Activated T-helper 2 cell treated with anti-CD3 and anti-CD28 coated beads, Interferon-gamma antibody, Interleukin-2, Interleukin-4, amounts not matched to agents 10 μg/mL and 5 μg/mL and 100 μg/mL, durations not matched to agents 14 hours and 24 hours and 36 hours (primary cell): ENCODE measurements at regions of chr2 and their contacts with region 1.

Region 1: DNA sequence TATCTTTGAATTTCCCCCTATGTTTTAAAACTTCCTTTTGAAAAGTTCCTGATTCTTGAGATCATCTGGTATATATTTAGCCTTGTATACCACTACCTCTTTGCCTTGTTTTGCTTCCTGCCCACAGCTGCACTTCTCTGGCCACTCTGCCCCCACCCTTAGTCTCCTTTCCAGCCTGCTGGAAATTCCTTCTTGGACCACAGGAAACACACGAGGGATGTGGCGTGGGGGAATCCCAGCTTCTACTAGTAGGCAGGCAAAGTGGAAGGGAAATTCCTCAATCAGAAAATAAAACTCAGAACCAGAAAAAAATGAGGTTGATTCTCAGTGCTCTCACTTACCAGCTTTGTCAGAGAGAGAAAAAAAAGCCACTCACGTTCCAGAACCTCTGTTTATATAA is 13.4 kb downstream of the IL18RAP start:
- DNase-seq: no peak
- H3K4me3 Mint-ChIP-seq: peak overlapping the region; percentile 9
- H3K27ac Mint-ChIP-seq: peak overlapping the region; percentile 63
- H3K4me1 Mint-ChIP-seq: peaks cover 32% of the 10 kb centered on the region
- H3K27me3 Mint-ChIP-seq: no peaks in the 10 kb centered on the region

Region 2: GRCh38 chr2:101710471-101711318 is 725.6 kb before region 1 on chr2:
- intact Hi-C with region 1: loop called (anchors 10 kb)
- DNase-seq: no peak
- H3K4me3 Mint-ChIP-seq: no peak overlapping the region
- H3K27ac Mint-ChIP-seq: no peak overlapping the region
- H3K4me1 Mint-ChIP-seq: peaks cover 48% of the 10 kb centered on the region
- H3K27me3 Mint-ChIP-seq: no peaks in the 10 kb centered on the region

Region 3: DNA sequence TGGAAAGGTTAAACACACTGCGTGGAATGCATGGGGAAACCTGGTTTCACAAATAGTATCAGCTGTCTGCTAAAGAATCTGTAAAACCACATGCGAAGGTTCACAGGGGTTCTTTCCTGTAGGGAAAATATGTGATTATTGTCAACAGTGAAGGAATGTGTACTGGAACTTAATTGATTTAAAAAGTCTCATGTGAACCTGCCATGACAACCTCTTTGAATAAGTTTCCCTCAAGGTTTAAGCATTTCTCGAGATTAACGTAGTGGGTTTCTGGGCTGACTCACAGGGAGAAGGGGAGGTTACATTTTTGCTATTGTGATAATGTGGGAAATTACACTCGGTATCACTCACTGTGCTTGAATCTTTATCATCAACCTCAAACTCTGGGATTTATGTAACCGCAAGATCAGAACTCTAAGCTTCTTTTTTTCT is 322.0 kb before region 1 on chr2:
- intact Hi-C with region 1: no loop called
- DNase-seq: no peak
- H3K4me3 Mint-ChIP-seq: no peak overlapping the region
- H3K27ac Mint-ChIP-seq: no peak overlapping the region
- H3K4me1 Mint-ChIP-seq: peaks cover 25% of the 10 kb centered on the region
- H3K27me3 Mint-ChIP-seq: peaks cover 43% of the 10 kb centered on the region

Region 4: DNA sequence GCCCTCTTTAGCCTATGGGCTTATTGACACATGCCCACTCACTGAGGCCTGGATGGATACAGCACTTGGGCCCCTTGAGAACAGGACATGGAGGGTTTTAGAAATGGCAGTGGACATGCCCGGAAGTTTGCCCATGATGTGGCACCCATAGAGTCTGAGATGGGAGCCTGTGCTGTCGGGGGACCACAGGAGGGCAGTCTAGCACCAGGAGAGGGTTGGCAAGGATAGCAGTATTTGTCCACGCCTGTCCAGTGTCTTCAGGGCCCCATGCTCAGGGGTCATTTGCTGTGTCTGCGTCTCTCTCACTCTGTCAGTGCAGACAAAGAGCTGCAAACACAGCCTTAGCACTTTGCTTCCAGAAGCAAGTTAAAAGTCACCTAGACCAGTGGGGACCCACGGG is 200.8 kb before region 1 on chr2:
- intact Hi-C with region 1: loop called (anchors 2 kb)
- DNase-seq: no peak
- H3K4me3 Mint-ChIP-seq: no peak overlapping the region
- H3K27ac Mint-ChIP-seq: no peak overlapping the region
- H3K4me1 Mint-ChIP-seq: peaks cover 48% of the 10 kb centered on the region
- H3K27me3 Mint-ChIP-seq: peaks cover 2% of the 10 kb centered on the region

Region 5: DNA sequence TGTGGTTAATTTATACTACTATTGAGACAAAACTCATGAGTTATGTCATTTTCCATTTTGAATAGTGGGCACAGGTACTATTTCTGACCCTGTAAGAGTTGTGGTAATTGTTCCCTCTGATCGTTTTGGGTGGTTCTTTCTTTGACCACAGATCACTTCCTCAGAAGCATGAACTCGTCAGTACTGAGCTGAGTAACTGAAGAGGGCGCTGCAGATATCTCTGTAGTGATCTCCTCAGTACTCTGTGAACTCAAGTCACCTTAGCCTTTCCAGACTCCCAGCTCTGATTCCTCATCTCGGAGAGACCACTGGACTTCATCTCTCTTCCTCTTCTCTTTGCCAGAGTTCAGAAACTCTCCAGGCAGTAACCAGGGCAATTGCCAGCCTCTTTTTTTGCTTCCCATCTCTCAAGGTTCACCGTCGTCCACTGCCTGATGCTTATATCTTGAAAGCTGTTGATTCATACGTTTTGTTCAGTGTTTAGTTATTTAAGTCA is 134.4 kb before region 1 on chr2:
- intact Hi-C with region 1: loop called (anchors 1 kb)
- DNase-seq: peak; percentile 55
- H3K4me3 Mint-ChIP-seq: peak overlapping the region; percentile 59
- H3K27ac Mint-ChIP-seq: peak overlapping the region; percentile 96
- H3K4me1 Mint-ChIP-seq: peaks cover 76% of the 10 kb centered on the region
- H3K27me3 Mint-ChIP-seq: no peaks in the 10 kb centered on the region

Region 6: GRCh38 chr2:102418421-102418961 is 17.8 kb before region 1 on chr2:
- intact Hi-C with region 1: loop called (anchors 1 kb)
- DNase-seq: no peak
- H3K4me3 Mint-ChIP-seq: peak overlapping the region; percentile 73
- H3K27ac Mint-ChIP-seq: peak overlapping the region; percentile 75
- H3K4me1 Mint-ChIP-seq: peaks cover 69% of the 10 kb centered on the region
- H3K27me3 Mint-ChIP-seq: peaks cover 3% of the 10 kb centered on the region